OCI-LY7 (cell line): ENCODE measurements at regions of chr18 and their contacts with region 1.

Region 1: GRCh38 chr18:58117786-58118403 is 73.9 kb downstream of the NEDD4L start:
- DNase-seq: no peak
- H3K4me3 ChIP-seq: no peak overlapping the region
- H3K27ac ChIP-seq: no peak overlapping the region
- H3K4me1 ChIP-seq: no peaks in the 10 kb centered on the region
- CTCF ChIP-seq: no peak

Region 2: GRCh38 chr18:57881818-57882413 is 236.0 kb before region 1 on chr18:
- CTCF ChIA-PET with region 1: no interaction called
- POLR2A ChIA-PET with region 1: no interaction called
- intact Hi-C with region 1: loop called (anchors 1 kb)
- DNase-seq: peak; percentile 39
- H3K4me3 ChIP-seq: no peak overlapping the region
- H3K27ac ChIP-seq: no peak overlapping the region
- H3K4me1 ChIP-seq: no peaks in the 10 kb centered on the region
- CTCF ChIP-seq: peak; percentile 77

Region 3: DNA sequence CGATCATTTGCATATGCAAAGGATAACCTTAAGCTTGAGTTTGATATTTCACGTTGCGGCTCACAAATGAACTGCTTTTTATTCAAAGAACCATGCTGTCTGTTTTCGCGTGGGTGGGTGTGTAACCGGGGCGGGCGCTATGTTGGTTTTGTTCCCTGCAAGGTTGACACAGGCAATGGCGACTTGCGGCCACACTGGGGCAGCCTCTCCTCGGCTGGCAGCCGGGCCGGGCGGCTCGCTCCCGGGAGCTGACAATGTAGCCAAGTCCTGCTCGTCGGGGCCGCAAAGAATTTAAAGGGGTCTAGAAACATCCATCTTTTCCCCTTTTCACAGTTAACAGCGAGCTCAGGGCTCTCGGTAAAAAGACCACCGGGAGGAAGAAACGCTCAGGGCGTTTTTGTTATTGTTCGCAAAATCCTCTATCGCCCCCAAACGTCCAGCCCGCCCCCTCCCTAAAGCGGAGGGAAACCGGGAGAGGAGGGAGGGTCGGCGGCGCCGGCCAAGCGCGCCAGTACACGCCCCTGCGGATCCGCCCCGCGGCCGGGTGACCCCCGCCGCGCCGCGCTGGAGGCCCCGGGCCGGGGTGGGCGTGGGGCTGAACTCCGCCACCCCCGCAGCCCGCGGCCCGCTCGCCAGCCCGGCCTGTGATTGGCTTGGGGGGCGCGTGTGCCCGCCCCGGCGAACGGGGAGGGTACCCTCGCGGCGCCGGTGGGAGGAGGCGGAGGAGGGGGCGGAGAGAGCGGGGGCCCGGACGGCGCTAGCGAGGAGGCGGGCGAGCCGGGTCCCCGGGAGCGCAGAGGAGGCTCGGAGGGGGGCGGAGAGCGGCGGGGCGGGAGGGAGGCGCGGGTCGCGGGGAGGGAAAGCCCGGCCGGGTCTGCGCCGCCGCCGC is 74.2 kb before region 1 on chr18 and contains the start of gene NEDD4L:
- CTCF ChIA-PET with region 1: no interaction called
- POLR2A ChIA-PET with region 1: no interaction called
- intact Hi-C with region 1: loop called (anchors 1 kb)
- DNase-seq: peak; percentile 71
- H3K4me3 ChIP-seq: peak within 1 kb of the TSS; percentile 78
- H3K27ac ChIP-seq: peak within 1 kb of the TSS; percentile 16
- H3K4me1 ChIP-seq: peaks cover 6% of the 10 kb centered on the region
- CTCF ChIP-seq: peak; percentile 76
- total RNA-seq, gene NEDD4L: 3.3 and 3.4 TPM in 2 replicates

Region 4: GRCh38 chr18:58064406-58064998 is 53.4 kb before region 1 on chr18:
- CTCF ChIA-PET with region 1: no interaction called
- POLR2A ChIA-PET with region 1: no interaction called
- intact Hi-C with region 1: no loop called
- DNase-seq: no peak
- H3K4me3 ChIP-seq: no peak overlapping the region
- H3K27ac ChIP-seq: no peak overlapping the region
- H3K4me1 ChIP-seq: no peaks in the 10 kb centered on the region
- CTCF ChIP-seq: no peak